Activated B cell treated with CpG ODN at 0.5 μM for 24 hours (primary cell): ENCODE measurements at regions of chr1 and their contacts with region 1.

Region 1: DNA sequence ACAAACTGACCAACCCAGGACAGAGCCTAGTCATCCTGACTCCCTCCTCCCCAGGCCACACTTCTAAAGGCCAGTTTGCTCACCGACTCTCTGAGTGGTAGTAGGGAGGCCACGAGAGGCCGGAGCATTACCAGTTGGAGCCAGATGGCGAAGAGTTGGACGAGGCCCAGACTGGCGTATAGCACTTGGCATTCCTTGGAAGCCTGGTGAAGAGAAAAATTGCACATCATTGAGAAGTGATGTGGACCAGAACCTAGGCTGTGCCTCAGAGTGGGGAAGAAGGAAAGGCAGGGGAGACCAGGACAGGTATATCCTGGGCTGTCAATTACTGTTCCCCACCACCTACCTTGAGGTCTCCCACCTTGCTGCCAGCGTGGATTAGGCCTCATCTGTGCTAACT is 12.2 kb downstream of the PABPC4 start:
- DNase-seq: no peak
- ATAC-seq: no peak
- H3K4me3 Mint-ChIP-seq: no peak overlapping the region
- H3K27ac Mint-ChIP-seq: no peak overlapping the region
- H3K4me1 Mint-ChIP-seq: peaks cover 3% of the 10 kb centered on the region
- H3K27me3 Mint-ChIP-seq: no peaks in the 10 kb centered on the region
- CTCF ChIP-seq: no peak

Region 2: DNA sequence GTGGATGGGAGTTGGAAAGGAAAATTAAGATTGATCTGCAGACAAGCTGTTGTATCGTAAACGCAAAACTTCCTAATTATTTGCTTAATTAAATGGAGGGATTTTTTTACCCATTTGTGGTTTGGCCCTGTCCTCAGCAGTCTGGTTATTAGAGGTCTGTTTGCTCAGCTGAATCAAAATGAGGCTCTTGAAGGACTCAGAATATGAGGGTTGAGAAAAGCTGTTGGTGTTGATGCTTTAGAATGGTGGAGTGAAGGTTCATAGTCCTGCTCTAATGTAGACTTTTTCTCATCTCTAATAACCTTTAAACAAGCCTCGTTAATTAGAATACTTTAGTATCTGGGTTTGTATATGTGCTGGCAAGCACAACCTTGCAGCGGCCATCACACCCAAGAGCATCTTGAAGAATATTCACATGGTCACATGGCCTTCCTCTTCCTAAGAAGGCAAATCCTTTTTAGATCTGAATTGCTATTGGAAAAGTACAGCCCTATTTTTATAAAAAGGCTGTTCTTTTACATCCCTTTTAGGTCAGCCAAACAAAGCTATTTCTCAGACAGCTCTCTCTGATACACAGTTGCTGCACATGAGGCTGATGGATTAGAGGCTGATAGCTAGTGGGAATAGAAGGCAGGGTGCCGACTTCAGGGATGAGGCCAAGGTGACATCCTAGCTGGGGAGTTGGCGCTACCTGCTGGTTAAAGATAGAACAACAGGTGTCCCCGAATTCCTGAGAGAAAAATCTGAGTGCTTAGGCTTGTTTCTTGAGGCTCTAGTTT is 306.0 kb before region 1 on chr1:
- CTCF ChIA-PET with region 1: no interaction called
- POLR2A ChIA-PET with region 1: no interaction called
- intact Hi-C with region 1: no loop called
- DNase-seq: peak; percentile 32
- ATAC-seq: peak; percentile 70
- H3K4me3 Mint-ChIP-seq: no peak overlapping the region
- H3K27ac Mint-ChIP-seq: peak overlapping the region; percentile 11
- H3K4me1 Mint-ChIP-seq: peaks cover 32% of the 10 kb centered on the region
- H3K27me3 Mint-ChIP-seq: no peaks in the 10 kb centered on the region
- CTCF ChIP-seq: peak; percentile 55

Region 3: GRCh38 chr1:39575191-39576015 is 11.1 kb after region 1 on chr1:
- CTCF ChIA-PET with region 1: no interaction called
- POLR2A ChIA-PET with region 1: interaction called, 9 read pairs
- intact Hi-C with region 1: loop called (anchors 1 kb)
- DNase-seq: peak; percentile 33
- ATAC-seq: peak; percentile 23
- H3K4me3 Mint-ChIP-seq: peak overlapping the region; percentile 89
- H3K27ac Mint-ChIP-seq: peak overlapping the region; percentile 82
- H3K4me1 Mint-ChIP-seq: peaks cover 35% of the 10 kb centered on the region
- H3K27me3 Mint-ChIP-seq: no peaks in the 10 kb centered on the region
- CTCF ChIP-seq: no peak